Breast epithelium (tissue), 4 donors: ENCODE measurements at regions of chr5 and their contacts with region 1.

Region 1: GRCh38 chr5:157178966-157179365 is 1.7 kb upstream of the ITK start:
- DNase-seq: no peak
- H3K4me3 ChIP-seq: no peak overlapping the region
- H3K27ac ChIP-seq: no peak overlapping the region
- H3K4me1 ChIP-seq: no peaks in the 10 kb centered on the region
- H3K27me3 ChIP-seq: peaks cover 0 to 4% of the 10 kb centered on the region in 2 donors
- CTCF ChIP-seq: no peak
- POLR2A ChIP-seq: no peak

Region 2: DNA sequence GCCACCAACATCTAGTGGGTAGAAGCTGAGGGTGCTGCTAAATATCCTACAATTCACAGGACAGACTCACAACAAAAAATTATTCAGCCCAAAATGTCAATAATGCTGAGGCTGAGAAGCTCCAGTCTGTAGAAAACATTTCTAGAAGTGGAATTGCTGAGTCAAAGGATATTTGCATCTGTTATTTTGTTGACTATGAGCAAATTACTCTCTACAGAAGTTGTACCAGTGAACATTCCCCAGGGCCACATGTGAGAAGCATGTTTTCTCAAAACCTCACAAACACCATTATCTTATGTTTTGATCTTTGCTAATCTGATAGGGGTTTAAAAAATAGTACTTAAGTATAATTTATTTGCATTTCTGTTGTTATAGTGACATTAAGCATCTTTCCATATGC is 17.1 kb after region 1 on chr5:
- intact Hi-C with region 1: loop called (anchors 1 kb)
- DNase-seq: no peak
- H3K4me3 ChIP-seq: no peak overlapping the region
- H3K27ac ChIP-seq: no peak overlapping the region
- H3K4me1 ChIP-seq: no peaks in the 10 kb centered on the region
- H3K27me3 ChIP-seq: no peaks in the 10 kb centered on the region
- CTCF ChIP-seq: no peak
- POLR2A ChIP-seq: no peak

Region 3: DNA sequence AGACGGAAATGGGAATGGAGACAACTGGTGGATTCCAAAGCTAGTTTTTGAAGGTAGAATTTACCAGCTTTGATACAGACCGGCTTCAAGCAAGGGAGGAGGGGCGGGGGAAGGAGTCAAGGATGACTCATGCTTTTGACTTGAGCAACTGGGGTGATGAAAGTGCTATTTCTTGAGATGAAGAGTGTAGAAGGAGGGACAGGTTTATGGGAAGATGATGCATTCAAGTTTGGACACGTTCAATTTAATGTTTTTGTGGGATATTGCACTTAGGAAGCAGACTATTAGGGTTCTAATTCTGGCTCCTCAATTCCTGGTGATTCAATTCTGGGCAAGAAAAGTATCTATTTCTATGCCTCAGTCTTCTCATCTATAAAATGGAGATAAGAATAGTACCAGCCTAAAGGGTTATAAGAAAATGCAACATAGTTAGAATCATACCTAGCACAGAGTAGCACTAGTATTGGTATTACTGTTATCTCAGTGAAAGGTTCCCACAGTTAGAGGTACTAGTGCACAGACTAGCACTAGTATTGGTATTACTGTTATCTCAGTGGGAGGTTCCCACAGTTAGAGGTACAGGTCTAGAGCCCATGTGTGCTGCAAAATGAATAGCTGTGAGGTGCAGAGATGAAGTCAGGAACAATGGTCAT is 285.7 kb after region 1 on chr5:
- intact Hi-C with region 1: no loop called
- DNase-seq: no peak
- H3K4me3 ChIP-seq: no peak overlapping the region
- H3K27ac ChIP-seq: no peak overlapping the region
- H3K4me1 ChIP-seq: peaks cover 0 to 3% of the 10 kb centered on the region in 2 donors
- H3K27me3 ChIP-seq: peaks cover 5 to 14% of the 10 kb centered on the region in 2 donors
- CTCF ChIP-seq: no peak
- POLR2A ChIP-seq: no peak